PC-3 (cell line): ENCODE measurements at regions of chr12 and their contacts with region 1.

Region 1: GRCh38 chr12:91225316-91225715 is 42.7 kb upstream of the DCN start:
- DNase-seq: no peak
- ATAC-seq: no peak
- H3K4me3 ChIP-seq: no peak overlapping the region
- H3K27ac ChIP-seq: no peak overlapping the region
- H3K4me1 ChIP-seq: peaks cover 10% of the 10 kb centered on the region; the same call in 1 of the 2 replicates
- H3K27me3 ChIP-seq: peaks cover 3% of the 10 kb centered on the region; the same call in 1 of the 2 replicates
- CTCF ChIP-seq: no peak

Region 2: DNA sequence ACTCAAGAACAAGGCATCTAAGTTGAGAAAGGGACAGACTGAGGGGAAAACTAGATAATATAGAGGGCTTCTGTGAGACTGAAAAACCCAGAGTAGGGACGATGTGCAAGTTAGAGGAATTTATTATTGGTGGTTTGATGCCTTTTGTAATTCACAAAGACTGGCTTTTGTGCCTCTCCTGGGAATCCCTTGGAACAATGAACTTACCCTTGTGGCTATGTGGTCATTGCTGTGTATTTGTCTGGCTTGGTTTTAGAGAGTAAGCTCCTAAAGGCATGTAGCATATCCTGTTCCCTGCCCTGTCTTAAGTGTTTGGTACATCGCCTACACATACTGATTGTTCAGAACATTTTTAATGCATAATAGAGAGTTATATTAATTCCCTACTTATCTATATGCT is 69.3 kb before region 1 on chr12:
- CTCF ChIA-PET with region 1: no interaction called
- POLR2A ChIA-PET with region 1: no interaction called
- intact Hi-C with region 1: no loop called
- DNase-seq: no peak
- ATAC-seq: no peak
- H3K4me3 ChIP-seq: no peak overlapping the region
- H3K27ac ChIP-seq: no peak overlapping the region
- H3K4me1 ChIP-seq: no peaks in the 10 kb centered on the region
- H3K27me3 ChIP-seq: no peaks in the 10 kb centered on the region
- CTCF ChIP-seq: no peak

Region 3: GRCh38 chr12:91172096-91172495 is 53.2 kb before region 1 on chr12:
- CTCF ChIA-PET with region 1: no interaction called
- POLR2A ChIA-PET with region 1: no interaction called
- intact Hi-C with region 1: no loop called
- DNase-seq: no peak
- ATAC-seq: no peak
- H3K4me3 ChIP-seq: no peak overlapping the region
- H3K27ac ChIP-seq: no peak overlapping the region
- H3K4me1 ChIP-seq: no peaks in the 10 kb centered on the region
- H3K27me3 ChIP-seq: no peaks in the 10 kb centered on the region
- CTCF ChIP-seq: no peak

Region 4: DNA sequence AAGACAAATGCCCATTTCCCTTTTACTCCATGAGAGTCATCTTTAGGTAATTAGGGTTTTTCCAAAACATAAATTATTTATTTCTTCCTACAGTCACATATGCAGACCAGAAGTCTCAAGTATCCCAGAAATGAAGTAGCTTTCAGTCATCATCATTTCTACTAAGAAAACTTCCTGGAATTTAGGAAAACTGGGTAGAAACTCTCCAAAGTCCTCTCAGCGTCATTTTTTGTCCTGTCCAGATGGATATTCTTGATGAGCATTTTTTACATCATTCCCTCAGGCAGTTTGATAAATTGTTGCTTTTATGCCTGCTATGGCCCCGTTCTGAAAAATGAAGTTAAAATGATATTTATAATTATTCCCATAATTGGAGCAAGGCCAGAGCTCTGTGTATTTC is 51.2 kb after region 1 on chr12:
- CTCF ChIA-PET with region 1: no interaction called
- POLR2A ChIA-PET with region 1: no interaction called
- intact Hi-C with region 1: no loop called
- DNase-seq: no peak
- ATAC-seq: no peak
- H3K4me3 ChIP-seq: no peak overlapping the region
- H3K27ac ChIP-seq: no peak overlapping the region
- H3K4me1 ChIP-seq: no peaks in the 10 kb centered on the region
- H3K27me3 ChIP-seq: peaks cover 16% of the 10 kb centered on the region; the same call in 1 of the 2 replicates
- CTCF ChIP-seq: no peak

Region 5: GRCh38 chr12:91852634-91853033 is 627.3 kb after region 1 on chr12:
- CTCF ChIA-PET with region 1: no interaction called
- POLR2A ChIA-PET with region 1: interaction called, 12 read pairs
- intact Hi-C with region 1: no loop called
- DNase-seq: peak; percentile 54
- ATAC-seq: no peak; the same call in 1 of the 2 replicates
- H3K4me3 ChIP-seq: no peak overlapping the region
- H3K27ac ChIP-seq: no peak overlapping the region
- H3K4me1 ChIP-seq: peaks cover 8% of the 10 kb centered on the region
- H3K27me3 ChIP-seq: no peaks in the 10 kb centered on the region
- CTCF ChIP-seq: no peak